ENCODE measurements at regions of chr10 and their contacts with region 1.

Region 1: GRCh38 chr10:70233109-70233938 is at the start of gene PPA1:
- DNase-seq: peak; percentile 100
- ATAC-seq: peak; percentile 91
- H3K4me3 Mint-ChIP-seq: peak within 1 kb of the TSS; percentile 83
- H3K27ac Mint-ChIP-seq: peak within 1 kb of the TSS; percentile 89
- H3K4me1 Mint-ChIP-seq: peaks cover 31% of the 10 kb centered on the region
- H3K27me3 Mint-ChIP-seq: no peaks in the 10 kb centered on the region
- total RNA-seq, gene PPA1: 286 to 328 TPM

Region 2: GRCh38 chr10:70169649-70170364 is 63.5 kb before region 1 on chr10:
- CTCF ChIA-PET with region 1: interaction called, 4 read pairs
- POLR2A ChIA-PET with region 1: interaction called, 5 read pairs
- intact Hi-C with region 1: loop called (anchors 1 to 2 kb)
- DNase-seq: no peak
- ATAC-seq: peak; percentile 5
- H3K4me3 Mint-ChIP-seq: peak overlapping the region; percentile 94
- H3K27ac Mint-ChIP-seq: peak overlapping the region; percentile 84
- H3K4me1 Mint-ChIP-seq: peaks cover 64% of the 10 kb centered on the region
- H3K27me3 Mint-ChIP-seq: no peaks in the 10 kb centered on the region

Region 3: GRCh38 chr10:70255329-70256299 is 22.3 kb after region 1 on chr10:
- CTCF ChIA-PET with region 1: no interaction called
- POLR2A ChIA-PET with region 1: interaction called, 3 read pairs
- intact Hi-C with region 1: loop called in 1 of 2 experiments (anchors 1 kb)
- DNase-seq: peak; percentile 45
- ATAC-seq: peak; percentile 67
- H3K4me3 Mint-ChIP-seq: peak overlapping the region; percentile 46
- H3K27ac Mint-ChIP-seq: no peak overlapping the region
- H3K4me1 Mint-ChIP-seq: peaks cover 6% of the 10 kb centered on the region
- H3K27me3 Mint-ChIP-seq: peaks cover 42% of the 10 kb centered on the region

Region 4: GRCh38 chr10:70381471-70382421 is 148.4 kb after region 1 on chr10:
- CTCF ChIA-PET with region 1: no interaction called
- POLR2A ChIA-PET with region 1: no interaction called
- intact Hi-C with region 1: loop called (anchors 1 to 5 kb)
- DNase-seq: peak; percentile 61
- ATAC-seq: peak; percentile 47
- H3K4me3 Mint-ChIP-seq: peak overlapping the region; percentile 81
- H3K27ac Mint-ChIP-seq: peak overlapping the region; percentile 33
- H3K4me1 Mint-ChIP-seq: peaks cover 6% of the 10 kb centered on the region
- H3K27me3 Mint-ChIP-seq: peaks cover 3% of the 10 kb centered on the region

Region 5: GRCh38 chr10:70779511-70780369 is 546.4 kb after region 1 on chr10:
- CTCF ChIA-PET with region 1: no interaction called
- POLR2A ChIA-PET with region 1: no interaction called
- intact Hi-C with region 1: no loop called
- DNase-seq: no peak
- ATAC-seq: no peak
- H3K4me3 Mint-ChIP-seq: no peak overlapping the region
- H3K27ac Mint-ChIP-seq: no peak overlapping the region
- H3K4me1 Mint-ChIP-seq: no peaks in the 10 kb centered on the region
- H3K27me3 Mint-ChIP-seq: peaks cover 3% of the 10 kb centered on the region